ENCODE measurements at regions of chr6 and their contacts with region 1.

Region 1: GRCh38 chr6:16409531-16410441 is 171.4 kb downstream of the GMPR start:
- DNase-seq: no peak
- ATAC-seq: peak; percentile 40
- H3K4me3 ChIP-seq: no peak overlapping the region
- H3K27ac ChIP-seq: no peak overlapping the region
- H3K4me1 ChIP-seq: peaks cover 11% of the 10 kb centered on the region
- H3K27me3 ChIP-seq: no peaks in the 10 kb centered on the region
- CTCF ChIP-seq: peak; percentile 60 to 86 (median 83)
- EP300 ChIP-seq: no peak
- POLR2A ChIP-seq: no peak
- RAD21 ChIP-seq: peak; percentile 79

Region 2: GRCh38 chr6:16224409-16224808 is 185.4 kb before region 1 on chr6:
- CTCF ChIA-PET with region 1: no interaction called
- POLR2A ChIA-PET with region 1: no interaction called
- RAD21 ChIA-PET with region 1: no interaction called
- SMC1A ChIA-PET with region 1: no interaction called
- in situ Hi-C with region 1: no loop called
- intact Hi-C with region 1: no loop called
- DNase-seq: no peak
- ATAC-seq: 0 out of 3 replicates have a peak, but pooled peaks have one; percentile 24
- H3K4me3 ChIP-seq: no peak overlapping the region
- H3K27ac ChIP-seq: no peak overlapping the region
- H3K4me1 ChIP-seq: no peaks in the 10 kb centered on the region
- H3K27me3 ChIP-seq: no peaks in the 10 kb centered on the region; a peak in 1 of 4 replicates
- CTCF ChIP-seq: no peak
- EP300 ChIP-seq: no peak
- POLR2A ChIP-seq: no peak
- RAD21 ChIP-seq: no peak

Region 3: GRCh38 chr6:16267428-16268263 is 142.1 kb before region 1 on chr6:
- CTCF ChIA-PET with region 1: no interaction called
- POLR2A ChIA-PET with region 1: no interaction called
- RAD21 ChIA-PET with region 1: no interaction called
- SMC1A ChIA-PET with region 1: no interaction called
- in situ Hi-C with region 1: no loop called
- intact Hi-C with region 1: no loop called
- DNase-seq: no peak
- ATAC-seq: no peak
- H3K4me3 ChIP-seq: no peak overlapping the region
- H3K27ac ChIP-seq: no peak overlapping the region
- H3K4me1 ChIP-seq: no peaks in the 10 kb centered on the region
- H3K27me3 ChIP-seq: no peaks in the 10 kb centered on the region; a peak in 1 of 4 replicates
- CTCF ChIP-seq: no peak
- EP300 ChIP-seq: no peak
- POLR2A ChIP-seq: no peak
- RAD21 ChIP-seq: no peak

Region 4: DNA sequence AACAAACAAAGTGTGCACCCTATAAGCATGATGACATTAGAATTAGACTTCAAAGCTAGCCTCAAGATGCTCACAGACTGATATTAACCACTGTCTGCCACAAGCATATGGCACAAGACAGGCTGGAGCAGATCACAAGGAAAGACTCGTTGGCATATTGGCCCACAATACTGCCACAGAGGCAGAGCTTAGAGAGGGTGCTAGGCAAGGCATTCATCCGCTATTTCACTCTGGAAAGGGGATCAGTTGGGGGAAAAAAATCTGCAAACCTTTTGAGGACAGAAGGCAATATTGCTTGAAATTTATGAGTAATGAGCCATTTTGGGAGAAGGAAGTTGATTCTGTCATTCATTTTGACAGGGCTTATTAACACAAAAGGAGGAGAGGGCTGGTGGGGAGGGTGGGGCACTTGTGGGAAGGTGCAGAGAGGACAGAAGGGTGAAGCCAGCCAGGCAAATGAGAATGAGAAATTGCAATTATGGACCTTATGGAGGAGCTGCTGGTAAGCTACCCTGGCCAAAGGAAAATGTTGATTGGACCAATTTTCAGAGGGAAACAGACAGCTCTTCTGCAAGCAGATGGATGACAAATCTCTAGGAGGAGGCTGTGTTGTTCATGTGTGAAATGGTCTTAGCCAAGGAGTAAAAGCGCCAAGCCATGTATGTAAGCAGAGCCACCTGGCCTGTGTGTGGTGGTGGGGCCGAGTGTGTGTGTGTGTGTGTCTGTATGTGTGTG is 16.3 kb after region 1 on chr6:
- CTCF ChIA-PET with region 1: interaction called, 9 read pairs
- POLR2A ChIA-PET with region 1: interaction called, 6 read pairs
- RAD21 ChIA-PET with region 1: interaction called, 17 read pairs
- SMC1A ChIA-PET with region 1: interaction called, 28 read pairs
- in situ Hi-C with region 1: no loop called
- intact Hi-C with region 1: no loop called
- DNase-seq: no peak
- ATAC-seq: no peak
- H3K4me3 ChIP-seq: no peak overlapping the region
- H3K27ac ChIP-seq: no peak overlapping the region
- H3K4me1 ChIP-seq: peaks cover 22% of the 10 kb centered on the region
- H3K27me3 ChIP-seq: no peaks in the 10 kb centered on the region
- CTCF ChIP-seq: no peak
- EP300 ChIP-seq: no peak
- POLR2A ChIP-seq: no peak
- RAD21 ChIP-seq: no peak

Region 5: GRCh38 chr6:16438718-16439591 is 29.2 kb after region 1 on chr6:
- CTCF ChIA-PET with region 1: interaction called, 10 read pairs
- POLR2A ChIA-PET with region 1: interaction called, 7 read pairs
- RAD21 ChIA-PET with region 1: interaction called, 33 read pairs
- SMC1A ChIA-PET with region 1: interaction called, 28 read pairs
- in situ Hi-C with region 1: no loop called
- intact Hi-C with region 1: no loop called
- DNase-seq: peak; percentile 53
- ATAC-seq: peak; percentile 78
- H3K4me3 ChIP-seq: no peak overlapping the region
- H3K27ac ChIP-seq: peak overlapping the region; percentile 70
- H3K4me1 ChIP-seq: peaks cover 41% of the 10 kb centered on the region
- H3K27me3 ChIP-seq: no peaks in the 10 kb centered on the region
- CTCF ChIP-seq: no peak
- EP300 ChIP-seq: no peak
- POLR2A ChIP-seq: no peak
- RAD21 ChIP-seq: no peak

Region 6: DNA sequence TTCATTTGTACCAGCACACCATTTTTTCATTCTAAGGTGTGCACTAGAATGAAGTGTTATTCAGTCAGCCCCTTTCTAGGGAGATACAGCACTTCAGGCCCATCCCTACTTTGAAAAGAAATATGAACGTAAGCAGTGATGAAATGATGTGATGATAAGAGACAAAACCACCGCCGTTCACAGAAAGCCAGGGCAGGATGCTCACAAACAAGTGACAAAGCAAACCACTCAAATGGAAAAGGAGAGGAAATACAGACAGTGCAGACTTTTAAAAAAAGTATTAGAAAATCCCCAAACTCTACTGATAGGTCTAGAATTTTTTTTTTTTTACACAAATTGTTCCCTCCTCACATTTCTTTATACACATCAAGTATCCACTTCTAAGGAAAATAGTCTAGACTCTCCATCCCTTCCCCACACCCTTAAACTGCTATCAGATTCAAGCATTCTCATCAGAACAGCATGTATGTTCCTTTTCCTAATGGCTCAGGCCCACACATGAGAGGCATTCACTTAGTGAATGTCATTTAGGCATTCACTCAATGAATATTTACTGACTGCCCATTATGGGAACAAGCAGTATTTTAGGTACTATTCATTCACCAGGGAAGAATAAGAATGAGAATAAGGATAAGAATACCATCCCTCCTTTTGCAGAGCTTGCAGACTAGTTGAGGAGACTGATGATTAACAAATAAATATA is 72.1 kb after region 1 on chr6:
- CTCF ChIA-PET with region 1: interaction called, 12 read pairs
- POLR2A ChIA-PET with region 1: interaction called, 14 read pairs
- RAD21 ChIA-PET with region 1: interaction called, 29 read pairs
- SMC1A ChIA-PET with region 1: interaction called, 42 read pairs
- in situ Hi-C with region 1: no loop called
- intact Hi-C with region 1: no loop called
- DNase-seq: no peak
- ATAC-seq: peak; percentile 61
- H3K4me3 ChIP-seq: peak overlapping the region; percentile 20; the same call in 1 of the 2 replicates
- H3K27ac ChIP-seq: peak overlapping the region; percentile 83
- H3K4me1 ChIP-seq: peaks cover 65% of the 10 kb centered on the region
- H3K27me3 ChIP-seq: no peaks in the 10 kb centered on the region
- CTCF ChIP-seq: no peak
- EP300 ChIP-seq: peak; percentile 68 to 77; a peak in 3 of 4 replicates
- POLR2A ChIP-seq: no peak
- RAD21 ChIP-seq: peak; percentile 3; the same call in 1 of the 2 replicates

Region 7: DNA sequence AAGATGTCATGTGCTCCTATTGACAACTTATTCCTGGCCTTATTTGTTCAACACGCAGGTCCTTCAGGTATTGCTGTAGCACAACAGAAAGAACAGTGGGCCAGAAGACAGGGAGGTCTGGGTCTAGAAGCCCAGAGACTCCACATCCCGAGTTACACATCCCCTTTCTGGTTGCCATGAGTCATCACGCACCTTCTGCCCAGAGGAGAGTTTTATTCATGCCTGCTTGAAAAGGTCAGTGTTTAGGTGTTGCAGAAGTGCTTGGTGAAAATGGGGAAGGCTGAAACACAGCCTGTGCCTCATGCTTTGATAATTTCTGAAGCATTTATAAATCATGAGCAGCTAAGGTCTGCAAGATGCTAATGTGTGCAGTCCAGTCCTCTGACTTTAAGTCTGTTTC is 85.0 kb after region 1 on chr6:
- CTCF ChIA-PET with region 1: interaction called, 6 read pairs
- POLR2A ChIA-PET with region 1: interaction called, 12 read pairs
- RAD21 ChIA-PET with region 1: interaction called, 24 read pairs
- SMC1A ChIA-PET with region 1: interaction called, 42 read pairs
- in situ Hi-C with region 1: no loop called
- intact Hi-C with region 1: no loop called
- DNase-seq: peak; percentile 90
- ATAC-seq: peak; percentile 75
- H3K4me3 ChIP-seq: peak overlapping the region; percentile 3; the same call in 1 of the 2 replicates
- H3K27ac ChIP-seq: peak overlapping the region; percentile 85
- H3K4me1 ChIP-seq: peaks cover 60% of the 10 kb centered on the region
- H3K27me3 ChIP-seq: no peaks in the 10 kb centered on the region
- CTCF ChIP-seq: no peak
- EP300 ChIP-seq: peak in 1 of 2 experiments; percentile 87; a peak in 3 of 4 replicates
- POLR2A ChIP-seq: no peak
- RAD21 ChIP-seq: no peak

Measured in GM12878 (cell line).